ENCODE measurements at regions of chr4 and their contacts with region 1.

Region 1: GRCh38 chr4:152585023-152585441 is 49.1 kb upstream of the FBXW7 start:
- DNase-seq: peak in 4 of 5 donors; percentile 29 to 44 (median 36)
- H3K4me3 ChIP-seq: no peak overlapping the region
- H3K4me3 Mint-ChIP-seq: peak overlapping the region; percentile 58 to 86 (median 77)
- H3K27ac ChIP-seq: peak overlapping the region; percentile 41
- H3K27ac Mint-ChIP-seq: peak overlapping the region; percentile 80 to 98 (median 92)
- H3K4me1 ChIP-seq: peaks cover 26% of the 10 kb centered on the region
- H3K4me1 Mint-ChIP-seq: peaks cover 16 to 31% (median 17%) of the 10 kb centered on the region in 4 donors
- H3K27me3 ChIP-seq: no peaks in the 10 kb centered on the region
- H3K27me3 Mint-ChIP-seq: peaks cover 0 to 1% of the 10 kb centered on the region in 2 donors

Region 2: DNA sequence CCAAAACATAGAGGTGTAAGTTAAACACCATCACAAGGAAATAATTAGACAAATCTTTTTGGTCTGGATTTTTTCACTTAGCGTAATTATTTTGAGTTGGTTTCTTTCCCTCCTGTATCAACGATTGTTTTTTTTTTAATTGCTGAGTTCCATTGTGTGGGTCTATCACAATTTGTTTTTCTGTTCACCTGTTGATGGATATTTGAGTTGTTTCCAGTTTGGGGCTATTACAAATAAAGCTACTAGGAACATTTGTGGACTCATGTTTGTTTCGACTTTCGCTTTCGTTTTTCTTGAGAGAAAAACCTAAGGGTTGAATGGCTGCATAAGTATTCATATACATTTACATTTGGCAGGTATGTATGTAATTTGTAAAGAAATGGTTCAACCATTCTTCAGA is 28.7 kb before region 1 on chr4:
- CTCF ChIA-PET with region 1: interaction called, 4 read pairs
- POLR2A ChIA-PET with region 1: interaction called, 33 read pairs
- intact Hi-C with region 1: no loop called
- DNase-seq: peak in 2 of 5 donors; percentile 17 to 22
- H3K4me3 ChIP-seq: peak overlapping the region; percentile 9 to 22
- H3K4me3 Mint-ChIP-seq: peak overlapping the region; percentile 79 to 89 (median 86)
- H3K27ac ChIP-seq: peak overlapping the region; percentile 14
- H3K27ac Mint-ChIP-seq: peak overlapping the region; percentile 55 to 95 (median 94)
- H3K4me1 ChIP-seq: peaks cover 50% of the 10 kb centered on the region
- H3K4me1 Mint-ChIP-seq: peaks cover 29 to 57% (median 42%) of the 10 kb centered on the region in 4 donors
- H3K27me3 ChIP-seq: no peaks in the 10 kb centered on the region
- H3K27me3 Mint-ChIP-seq: no peaks in the 10 kb centered on the region